Prostate gland (tissue), 2 donors: ENCODE measurements at regions of chr9 and their contacts with region 1.

Region 1: DNA sequence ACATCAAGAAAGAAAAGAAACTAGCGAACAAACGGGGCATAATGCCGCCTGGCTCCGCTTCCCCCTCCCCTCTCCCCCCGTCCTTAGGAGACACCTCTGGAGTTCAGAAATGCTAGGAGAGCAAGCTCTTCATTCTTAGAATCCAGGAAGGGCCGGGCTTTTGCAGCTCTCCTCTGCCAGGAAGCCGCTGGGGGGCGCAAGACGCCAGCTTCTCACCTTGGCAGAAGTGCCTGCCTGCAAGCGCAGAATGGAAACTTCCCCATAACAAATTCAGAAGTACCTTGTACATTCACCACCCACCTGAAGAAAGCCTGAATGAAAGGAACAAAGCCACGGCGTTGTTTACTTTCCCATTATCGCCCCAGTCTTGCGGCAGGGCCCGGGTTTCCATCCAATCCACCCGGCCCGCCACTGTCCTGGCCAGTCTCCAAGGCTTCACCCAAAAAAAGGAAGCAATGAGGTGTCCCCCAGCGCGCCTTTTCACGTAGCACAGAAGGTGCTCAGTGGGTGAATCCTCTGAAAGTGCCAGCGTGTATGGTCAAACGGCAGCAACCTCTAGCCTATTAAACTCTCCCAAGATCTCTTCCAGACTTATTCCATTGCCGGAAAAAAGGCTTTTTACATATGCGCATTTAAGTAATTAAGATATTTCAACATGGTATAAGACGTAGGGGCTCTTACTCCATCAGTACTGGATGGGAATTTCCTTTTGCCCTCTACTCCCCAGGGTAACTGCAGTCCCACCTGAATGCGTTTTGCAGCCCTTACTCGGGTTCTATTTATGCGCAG is 1.6 kb upstream of the GADD45G start:
- DNase-seq: peak; percentile 92
- H3K4me3 ChIP-seq: peak overlapping the region; percentile 61 to 65
- H3K27ac ChIP-seq: peak overlapping the region; percentile 31 to 72
- H3K4me1 ChIP-seq: no peaks in the 10 kb centered on the region
- H3K27me3 ChIP-seq: no peaks in the 10 kb centered on the region
- CTCF ChIP-seq: peak; percentile 69 to 95 (median 91)
- POLR2A ChIP-seq: no peak

Region 2: DNA sequence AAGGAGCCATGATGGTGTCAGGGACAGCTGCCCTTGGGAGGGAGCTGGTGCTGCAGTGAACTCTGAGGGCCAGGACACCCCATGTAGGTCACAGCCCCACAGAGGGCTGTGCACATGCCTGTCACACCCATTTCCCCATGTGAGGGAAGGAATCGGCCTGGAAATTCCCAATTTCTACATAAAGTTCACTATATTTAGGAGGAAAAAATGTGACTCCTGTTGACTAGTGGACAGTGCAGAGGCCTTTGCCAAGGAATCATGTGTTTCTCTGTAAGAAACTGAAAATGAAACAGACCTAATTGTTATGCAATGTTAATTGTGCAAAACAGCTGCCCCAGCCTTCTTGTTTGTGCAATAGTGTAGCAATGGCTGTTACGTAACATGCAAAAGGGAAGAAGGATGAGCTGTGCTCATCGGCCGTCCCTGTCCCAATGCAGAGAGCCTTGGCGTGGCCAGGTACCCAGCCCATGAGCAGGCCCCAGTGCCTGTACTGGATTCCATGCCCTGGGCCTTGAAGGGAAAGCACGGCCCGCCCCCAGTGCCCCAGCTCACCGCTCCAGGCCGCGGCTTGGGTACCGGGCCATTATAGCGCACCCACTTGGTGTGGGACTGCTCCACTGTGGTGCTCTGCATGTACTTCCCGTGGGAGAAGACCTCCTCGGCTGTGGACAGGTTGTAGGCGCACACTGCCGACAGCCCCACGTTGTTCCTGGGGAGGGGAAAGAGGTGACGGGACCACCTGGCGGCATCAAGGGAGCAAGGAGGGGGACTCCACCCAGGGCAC is 214.9 kb before region 1 on chr9:
- intact Hi-C with region 1: no loop called
- DNase-seq: peak; percentile 33
- H3K4me3 ChIP-seq: no peak overlapping the region
- H3K27ac ChIP-seq: peak overlapping the region; percentile 3 to 36
- H3K4me1 ChIP-seq: no peaks in the 10 kb centered on the region
- H3K27me3 ChIP-seq: no peaks in the 10 kb centered on the region
- CTCF ChIP-seq: no peak
- POLR2A ChIP-seq: no peak

Region 3: GRCh38 chr9:89808076-89808755 is 205.0 kb after region 1 on chr9:
- intact Hi-C with region 1: loop called (anchors 10 kb)
- DNase-seq: no peak
- H3K4me3 ChIP-seq: no peak overlapping the region
- H3K27ac ChIP-seq: no peak overlapping the region
- H3K4me1 ChIP-seq: no peaks in the 10 kb centered on the region
- H3K27me3 ChIP-seq: no peaks in the 10 kb centered on the region
- CTCF ChIP-seq: no peak
- POLR2A ChIP-seq: no peak

Region 4: GRCh38 chr9:89929673-89930480 is 326.7 kb after region 1 on chr9:
- intact Hi-C with region 1: loop called (anchors 5 kb)
- DNase-seq: no peak
- H3K4me3 ChIP-seq: no peak overlapping the region
- H3K27ac ChIP-seq: no peak overlapping the region
- H3K4me1 ChIP-seq: peaks cover 10% of the 10 kb centered on the region
- H3K27me3 ChIP-seq: no peaks in the 10 kb centered on the region
- CTCF ChIP-seq: no peak
- POLR2A ChIP-seq: no peak

Region 5: GRCh38 chr9:90099262-90099963 is 496.2 kb after region 1 on chr9:
- intact Hi-C with region 1: loop called (anchors 1 kb)
- DNase-seq: no peak
- H3K4me3 ChIP-seq: no peak overlapping the region
- H3K27ac ChIP-seq: no peak overlapping the region
- H3K4me1 ChIP-seq: no peaks in the 10 kb centered on the region
- H3K27me3 ChIP-seq: no peaks in the 10 kb centered on the region
- CTCF ChIP-seq: peak; percentile 8 to 74 (median 44)
- POLR2A ChIP-seq: no peak